ENCODE measurements at regions of chr4 and their contacts with region 1.

Region 1: GRCh38 chr4:80322716-80323115 is 12.8 kb upstream of the CFAP299 start:
- DNase-seq: no peak
- H3K4me3 ChIP-seq: no peak overlapping the region
- CTCF ChIP-seq: peak; percentile 32

Region 2: GRCh38 chr4:79917246-79917645 is 405.5 kb before region 1 on chr4:
- CTCF ChIA-PET with region 1: no interaction called
- POLR2A ChIA-PET with region 1: no interaction called
- DNase-seq: peak; percentile 7
- H3K4me3 ChIP-seq: no peak overlapping the region
- CTCF ChIP-seq: peak; percentile 66

Region 3: GRCh38 chr4:80202190-80202711 is 120.5 kb before region 1 on chr4:
- CTCF ChIA-PET with region 1: interaction called, 14 read pairs
- POLR2A ChIA-PET with region 1: no interaction called
- DNase-seq: no peak
- H3K4me3 ChIP-seq: peak overlapping the region; percentile 63
- CTCF ChIP-seq: peak; percentile 88

Region 4: DNA sequence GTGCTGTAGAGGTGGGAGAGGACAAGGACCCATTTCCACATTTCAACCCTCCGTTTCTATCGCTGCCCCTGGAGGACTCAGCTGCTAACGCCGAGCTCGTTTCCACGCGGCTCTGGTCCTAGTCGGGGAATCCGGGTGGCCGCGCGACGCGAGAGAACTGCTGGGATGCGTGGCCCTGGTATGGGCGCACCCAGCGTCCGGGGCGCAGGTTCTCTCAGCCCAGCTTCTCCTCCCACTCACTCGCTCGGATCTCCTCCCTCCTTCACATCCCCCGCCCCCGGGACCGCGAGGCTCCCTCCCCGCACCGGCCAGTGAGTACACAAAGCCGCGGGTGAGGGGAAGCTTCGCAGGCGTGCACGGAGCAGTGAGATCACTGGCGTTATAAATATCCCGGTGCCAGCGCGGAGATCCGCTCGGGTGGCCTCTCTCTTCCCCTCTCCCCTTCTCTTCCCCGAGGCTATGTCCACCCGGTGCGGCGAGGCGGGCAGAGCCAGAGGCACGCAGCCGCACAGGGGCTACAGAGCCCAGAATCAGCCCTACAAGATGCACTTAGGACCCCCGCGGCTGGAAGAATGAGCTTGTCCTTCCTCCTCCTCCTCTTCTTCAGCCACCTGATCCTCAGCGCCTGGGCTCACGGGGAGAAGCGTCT is 56.3 kb before region 1 on chr4 and contains the start of gene FGF5:
- CTCF ChIA-PET with region 1: interaction called, 3 read pairs
- POLR2A ChIA-PET with region 1: interaction called, 11 read pairs
- DNase-seq: peak; percentile 75
- H3K4me3 ChIP-seq: peak within 1 kb of the TSS; percentile 92
- CTCF ChIP-seq: no peak

Region 5: DNA sequence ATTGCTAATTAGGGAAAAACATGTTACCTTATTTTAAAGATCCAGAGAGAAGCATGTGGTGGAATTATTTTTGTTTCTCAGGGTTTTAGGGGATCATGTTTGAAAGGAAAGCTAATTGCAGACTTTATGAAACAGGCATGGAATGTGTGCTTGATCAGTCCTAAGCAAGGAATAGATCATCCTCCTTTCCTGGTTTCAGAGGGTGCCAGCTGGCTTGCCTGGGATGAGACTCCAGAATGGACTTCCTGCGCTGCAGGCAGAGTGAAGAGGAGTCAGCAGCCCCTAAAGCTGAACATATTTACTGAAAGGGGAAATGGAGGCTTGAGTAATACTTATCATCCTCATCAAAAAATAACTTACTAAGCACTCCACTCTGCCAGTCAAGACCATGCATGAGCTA is 43.0 kb before region 1 on chr4:
- CTCF ChIA-PET with region 1: interaction called, 18 read pairs
- POLR2A ChIA-PET with region 1: no interaction called
- DNase-seq: no peak
- H3K4me3 ChIP-seq: no peak overlapping the region
- CTCF ChIP-seq: no peak

Region 6: DNA sequence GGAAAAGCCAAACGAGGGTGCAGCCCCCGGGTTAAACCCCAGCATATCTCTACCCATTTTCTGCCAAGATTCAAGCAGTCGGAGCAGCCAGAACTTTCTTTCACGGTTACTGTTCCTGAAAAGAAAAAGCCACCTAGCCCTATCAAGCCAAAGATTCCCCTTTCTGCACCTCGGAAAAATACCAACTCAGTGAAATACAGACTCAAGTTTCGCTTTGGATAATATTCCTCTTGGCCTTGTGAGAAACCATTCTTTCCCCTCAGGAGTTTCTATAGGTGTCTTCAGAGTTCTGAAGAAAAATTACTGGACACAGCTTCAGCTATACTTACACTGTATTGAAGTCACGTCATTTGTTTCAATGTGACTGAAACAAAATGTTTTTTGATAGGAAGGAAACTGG is 36.3 kb before region 1 on chr4:
- CTCF ChIA-PET with region 1: interaction called, 18 read pairs
- POLR2A ChIA-PET with region 1: no interaction called
- DNase-seq: no peak
- H3K4me3 ChIP-seq: no peak overlapping the region
- CTCF ChIP-seq: no peak

Region 7: GRCh38 chr4:80335554-80336358 is 13.0 kb after region 1 on chr4 and contains the start of gene CFAP299:
- CTCF ChIA-PET with region 1: interaction called, 10 read pairs
- POLR2A ChIA-PET with region 1: interaction called, 3 read pairs
- DNase-seq: no peak
- H3K4me3 ChIP-seq: peak within 1 kb of the TSS; percentile 81
- CTCF ChIP-seq: peak; percentile 75

Measured in AG04449 (cell line).